Caco-2 (cell line): ENCODE measurements at regions of chr19 and their contacts with region 1.

Region 1: DNA sequence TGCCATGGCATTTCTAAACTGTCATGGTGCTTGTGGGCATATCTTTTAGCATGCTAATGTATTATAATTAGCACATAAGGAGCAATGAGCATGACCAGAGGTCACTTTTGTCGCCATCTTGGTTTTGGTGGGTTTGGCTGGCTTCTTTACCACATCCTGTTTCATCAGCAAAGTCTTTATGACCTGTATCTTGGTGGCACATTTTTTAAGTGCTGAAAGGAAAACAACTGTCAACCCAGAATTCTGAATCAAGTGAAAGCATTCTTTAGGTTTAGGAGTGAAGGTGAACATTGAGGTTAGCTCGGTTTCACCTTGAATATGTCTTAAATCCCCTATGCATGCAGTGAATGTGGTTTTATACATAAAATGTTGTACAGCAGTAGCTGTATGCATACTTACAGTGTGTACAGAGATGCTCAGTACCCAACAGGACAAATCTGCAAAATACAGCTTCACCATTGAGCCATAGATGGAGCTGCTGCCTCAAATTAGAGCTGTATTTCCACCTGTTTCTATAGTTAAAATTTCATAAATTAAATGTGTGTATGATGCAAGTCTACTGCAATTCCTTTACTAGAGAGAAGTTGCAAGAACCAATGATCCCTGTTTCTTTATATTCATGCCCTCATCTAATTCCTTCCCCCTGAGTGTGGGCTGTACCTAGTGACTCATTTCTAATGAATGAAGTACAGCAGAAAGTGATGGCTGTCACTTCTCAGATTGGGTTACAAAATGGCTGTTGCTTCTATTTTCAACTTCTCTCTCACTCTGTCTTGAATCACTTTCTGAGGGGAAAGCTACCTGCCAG is 25.2 kb upstream of the IGSF23 start:
- DNase-seq: peak in 1 of 2 experiments; percentile 72
- H3K4me3 ChIP-seq: no peak overlapping the region
- H3K4me3 Mint-ChIP-seq: peak overlapping the region; percentile 67
- H3K27ac Mint-ChIP-seq: peak overlapping the region; percentile 99
- H3K4me1 ChIP-seq: peaks cover 57% of the 10 kb centered on the region
- H3K4me1 Mint-ChIP-seq: peaks cover 58% of the 10 kb centered on the region
- H3K27me3 ChIP-seq: no peaks in the 10 kb centered on the region
- H3K27me3 Mint-ChIP-seq: no peaks in the 10 kb centered on the region
- CTCF ChIP-seq: no peak

Region 2: DNA sequence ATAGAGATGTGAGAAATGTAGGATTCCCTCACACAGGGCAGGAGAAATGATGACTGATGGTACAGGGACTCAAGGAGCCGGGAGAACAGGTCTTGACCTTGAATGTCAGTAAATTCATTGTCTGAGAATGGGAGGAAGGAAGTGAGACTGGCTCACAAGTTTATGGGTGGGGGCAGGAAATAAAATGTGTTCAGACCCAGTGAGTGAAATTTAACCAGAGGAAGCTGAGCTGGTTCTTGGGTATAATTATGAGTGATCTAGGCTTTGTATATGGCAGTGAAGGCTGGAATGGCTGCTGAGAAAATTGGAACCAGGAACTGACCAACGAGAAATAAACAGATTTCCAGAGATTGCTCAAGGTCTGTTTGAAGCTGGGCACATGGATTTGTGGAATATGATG is 18.9 kb after region 1 on chr19:
- CTCF ChIA-PET with region 1: interaction called, 7 read pairs
- POLR2A ChIA-PET with region 1: interaction called, 4 read pairs
- intact Hi-C with region 1: loop called (anchors 1 kb)
- DNase-seq: no peak
- H3K4me3 ChIP-seq: no peak overlapping the region
- H3K4me3 Mint-ChIP-seq: no peak overlapping the region
- H3K27ac Mint-ChIP-seq: no peak overlapping the region
- H3K4me1 ChIP-seq: peaks cover 38% of the 10 kb centered on the region
- H3K4me1 Mint-ChIP-seq: peaks cover 36% of the 10 kb centered on the region
- H3K27me3 ChIP-seq: no peaks in the 10 kb centered on the region
- H3K27me3 Mint-ChIP-seq: no peaks in the 10 kb centered on the region
- CTCF ChIP-seq: no peak

Region 3: DNA sequence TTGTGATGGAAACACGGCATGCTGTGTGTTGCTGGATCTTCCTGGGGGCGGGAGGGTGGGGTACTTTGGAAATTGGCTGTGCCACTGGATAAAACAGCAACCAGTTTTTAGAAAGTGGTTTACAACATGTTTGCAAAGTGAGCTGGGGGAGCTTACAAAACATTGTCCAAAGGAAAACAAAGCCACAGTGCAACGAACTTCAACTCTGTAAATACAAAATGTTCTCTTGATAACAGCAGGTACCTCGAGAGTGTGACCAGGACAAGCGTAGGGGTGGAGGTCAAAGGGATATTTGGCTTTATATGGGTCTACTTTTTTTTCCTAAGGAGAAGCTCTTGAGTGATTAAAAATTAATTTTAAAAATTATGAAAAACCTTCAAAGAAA is 27.7 kb after region 1 on chr19:
- CTCF ChIA-PET with region 1: interaction called, 7 read pairs
- POLR2A ChIA-PET with region 1: interaction called, 3 read pairs
- intact Hi-C with region 1: loop called (anchors 1 kb)
- DNase-seq: no peak
- H3K4me3 ChIP-seq: no peak overlapping the region
- H3K4me3 Mint-ChIP-seq: no peak overlapping the region
- H3K27ac Mint-ChIP-seq: peak overlapping the region; percentile 78
- H3K4me1 ChIP-seq: peaks cover 55% of the 10 kb centered on the region
- H3K4me1 Mint-ChIP-seq: peaks cover 19% of the 10 kb centered on the region
- H3K27me3 ChIP-seq: no peaks in the 10 kb centered on the region
- H3K27me3 Mint-ChIP-seq: no peaks in the 10 kb centered on the region
- CTCF ChIP-seq: no peak

Region 4: DNA sequence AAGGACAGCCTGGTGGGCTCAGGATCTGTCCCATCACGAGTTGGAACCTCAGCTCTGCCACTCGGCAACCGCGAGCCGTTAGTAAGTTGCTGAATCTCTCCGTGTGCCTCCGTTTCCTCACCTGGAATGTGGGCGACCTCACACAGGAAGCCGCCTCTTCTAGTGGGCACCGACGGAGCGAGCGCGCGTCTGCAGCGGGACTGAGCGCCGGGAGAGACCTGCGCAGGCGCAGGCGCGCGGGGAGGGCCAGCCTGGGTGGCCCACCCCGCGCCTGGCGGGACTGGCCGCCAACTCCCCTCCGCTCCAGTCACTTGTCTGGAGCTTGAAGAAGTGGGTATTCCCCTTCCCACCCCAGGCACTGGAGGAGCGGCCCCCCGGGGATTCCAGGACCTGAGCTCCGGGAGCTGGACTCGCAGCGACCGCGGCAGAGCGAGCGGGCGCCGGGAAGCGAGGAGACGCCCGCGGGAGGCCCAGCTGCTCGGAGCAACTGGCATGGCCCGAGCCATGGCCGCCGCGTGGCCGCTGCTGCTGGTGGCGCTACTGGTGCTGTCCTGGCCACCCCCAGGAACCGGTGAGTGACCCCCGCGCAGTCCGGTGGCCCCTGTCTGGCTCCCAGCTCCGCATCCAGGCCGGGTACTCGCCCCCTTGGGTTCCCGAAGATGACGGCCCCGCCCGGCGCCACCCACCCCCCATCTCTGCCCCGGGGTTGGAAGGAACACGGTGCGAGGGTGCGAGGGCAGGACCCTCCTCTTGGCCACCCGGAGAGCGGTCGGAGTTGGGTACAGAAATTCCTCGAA is 55.6 kb after region 1 on chr19 and contains the start of gene PVR:
- CTCF ChIA-PET with region 1: interaction called, 7 read pairs
- POLR2A ChIA-PET with region 1: interaction called, 6 read pairs
- intact Hi-C with region 1: loop called (anchors 1 kb)
- DNase-seq: peak; percentile 76 to 85
- H3K4me3 ChIP-seq: peak within 1 kb of the TSS; percentile 91
- H3K4me3 Mint-ChIP-seq: peak within 1 kb of the TSS; percentile 83
- H3K27ac Mint-ChIP-seq: peak within 1 kb of the TSS; percentile 79
- H3K4me1 ChIP-seq: peaks cover 31% of the 10 kb centered on the region
- H3K4me1 Mint-ChIP-seq: peaks cover 27% of the 10 kb centered on the region
- H3K27me3 ChIP-seq: no peaks in the 10 kb centered on the region
- H3K27me3 Mint-ChIP-seq: no peaks in the 10 kb centered on the region
- CTCF ChIP-seq: no peak
- total RNA-seq, gene PVR: 86.5 and 93.8 TPM in 2 replicates

Region 5: GRCh38 chr19:44653977-44654774 is 66.0 kb after region 1 on chr19:
- CTCF ChIA-PET with region 1: interaction called, 22 read pairs
- POLR2A ChIA-PET with region 1: no interaction called
- intact Hi-C with region 1: loop called (anchors 1 kb)
- DNase-seq: peak in 1 of 2 experiments; percentile 54
- H3K4me3 ChIP-seq: no peak overlapping the region
- H3K4me3 Mint-ChIP-seq: no peak overlapping the region
- H3K27ac Mint-ChIP-seq: peak overlapping the region; percentile 31
- H3K4me1 ChIP-seq: no peaks in the 10 kb centered on the region
- H3K4me1 Mint-ChIP-seq: peaks cover 29% of the 10 kb centered on the region
- H3K27me3 ChIP-seq: no peaks in the 10 kb centered on the region
- H3K27me3 Mint-ChIP-seq: no peaks in the 10 kb centered on the region
- CTCF ChIP-seq: peak; percentile 20 to 58